ENCODE measurements at regions of chr3 and their contacts with region 1.

Region 1: DNA sequence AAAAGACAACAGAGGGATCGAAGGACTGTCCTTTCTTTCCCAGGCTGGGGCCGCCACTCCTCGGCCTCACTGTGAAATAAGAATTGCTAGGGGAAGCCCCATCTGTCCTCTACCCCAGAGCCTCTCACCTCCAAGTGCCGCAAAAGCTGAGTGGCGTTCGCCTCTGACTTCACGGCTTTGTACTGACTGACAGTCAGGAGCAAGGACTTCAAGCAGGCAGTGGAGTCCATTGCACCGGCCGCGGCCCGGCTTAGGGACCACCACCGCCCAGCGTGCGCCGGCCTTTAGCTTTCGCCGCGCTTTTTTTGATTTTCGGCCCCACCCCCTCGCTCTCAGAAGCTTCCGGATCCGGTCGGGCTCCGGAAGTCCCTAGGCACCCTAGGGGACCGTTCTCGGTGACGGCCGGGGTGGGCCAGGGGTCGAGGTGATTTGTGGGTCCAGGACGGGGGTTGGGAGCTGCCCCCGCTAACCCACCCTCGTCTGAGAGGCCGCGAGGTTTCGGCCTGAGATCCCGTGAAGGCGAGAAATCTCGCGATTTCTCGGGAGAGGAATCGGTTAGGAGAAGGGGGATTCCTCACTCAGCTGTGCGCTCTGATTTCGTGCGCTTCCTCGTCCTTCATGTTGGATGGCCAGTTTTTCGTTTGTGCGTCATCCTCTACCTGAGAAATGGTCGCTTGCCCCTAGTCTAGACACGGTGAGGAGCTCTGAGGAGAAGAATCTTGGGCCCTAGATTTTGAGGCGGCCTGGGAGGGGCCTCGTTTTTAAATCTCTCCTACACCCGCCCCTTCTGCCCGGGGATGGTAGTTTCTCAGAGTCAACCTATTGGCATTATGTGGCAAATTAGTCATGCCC is at the starts of genes CIP2A and DZIP3:
- DNase-seq: peak; percentile 64 to 96 (median 76)
- ATAC-seq: peak; percentile 80
- H3K4me3 ChIP-seq: peak within 1 kb of the TSS; percentile 79
- H3K4me3 Mint-ChIP-seq: peak within 1 kb of the TSS; percentile 96
- H3K27ac ChIP-seq: peak within 1 kb of the TSS; percentile 89 to 96
- H3K27ac Mint-ChIP-seq: peak within 1 kb of the TSS; percentile 99
- H3K4me1 ChIP-seq: peaks cover 12% of the 10 kb centered on the region
- H3K4me1 Mint-ChIP-seq: peaks cover 40% of the 10 kb centered on the region
- H3K27me3 ChIP-seq: no peaks in the 10 kb centered on the region
- H3K27me3 Mint-ChIP-seq: no peaks in the 10 kb centered on the region
- CTCF ChIP-seq: no peak
- total RNA-seq, gene CIP2A: 2.7 to 3.9 TPM
- total RNA-seq, gene DZIP3: 12.2 to 14.5 TPM

Region 2: GRCh38 chr3:107522510-107523288 is 1066.7 kb before region 1 on chr3 and contains the start of gene BBX:
- CTCF ChIA-PET with region 1: no interaction called
- POLR2A ChIA-PET with region 1: interaction called, 3 read pairs
- intact Hi-C with region 1: loop called in 1 of 2 experiments (anchors 10 kb)
- DNase-seq: peak; percentile 85 to 97 (median 92)
- ATAC-seq: peak; percentile 89
- H3K4me3 ChIP-seq: peak within 1 kb of the TSS; percentile 67
- H3K4me3 Mint-ChIP-seq: peak within 1 kb of the TSS; percentile 99
- H3K27ac ChIP-seq: peak within 1 kb of the TSS; percentile 77 to 85
- H3K27ac Mint-ChIP-seq: peak within 1 kb of the TSS; percentile 95
- H3K4me1 ChIP-seq: peaks cover 19% of the 10 kb centered on the region
- H3K4me1 Mint-ChIP-seq: peaks cover 26% of the 10 kb centered on the region
- H3K27me3 ChIP-seq: no peaks in the 10 kb centered on the region
- H3K27me3 Mint-ChIP-seq: no peaks in the 10 kb centered on the region
- CTCF ChIP-seq: no peak
- total RNA-seq, gene BBX: 79.7 to 81.8 TPM

Region 3: GRCh38 chr3:108578064-108578463 is 11.3 kb before region 1 on chr3:
- CTCF ChIA-PET with region 1: no interaction called
- POLR2A ChIA-PET with region 1: interaction called, 14 read pairs
- intact Hi-C with region 1: no loop called
- DNase-seq: no peak
- ATAC-seq: no peak
- H3K4me3 ChIP-seq: no peak overlapping the region
- H3K4me3 Mint-ChIP-seq: no peak overlapping the region
- H3K27ac ChIP-seq: no peak overlapping the region
- H3K27ac Mint-ChIP-seq: no peak overlapping the region
- H3K4me1 ChIP-seq: no peaks in the 10 kb centered on the region
- H3K4me1 Mint-ChIP-seq: no peaks in the 10 kb centered on the region
- H3K27me3 ChIP-seq: no peaks in the 10 kb centered on the region
- H3K27me3 Mint-ChIP-seq: no peaks in the 10 kb centered on the region
- CTCF ChIP-seq: no peak

Region 4: DNA sequence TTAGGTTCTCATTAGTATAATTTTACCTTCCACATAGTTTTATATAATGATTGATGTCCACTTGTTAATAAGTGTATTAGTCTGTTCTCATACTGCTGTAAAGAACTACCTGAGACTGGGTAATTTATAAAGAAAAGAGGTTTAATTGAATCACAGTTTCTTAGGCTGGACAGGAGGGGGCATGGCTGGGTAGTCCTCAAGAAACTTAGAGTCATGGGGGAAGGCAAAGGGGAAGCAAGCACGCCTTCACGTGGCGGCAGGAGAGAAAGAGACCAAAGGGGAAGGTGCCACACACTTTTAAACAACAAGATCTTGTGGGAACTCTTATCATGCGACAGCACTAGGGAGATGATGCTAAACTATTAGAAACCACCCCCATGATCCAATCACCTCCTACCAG is 19.4 kb after region 1 on chr3:
- CTCF ChIA-PET with region 1: interaction called, 7 read pairs
- POLR2A ChIA-PET with region 1: interaction called, 250 read pairs
- intact Hi-C with region 1: loop called in 1 of 2 experiments (anchors 2 kb)
- DNase-seq: no peak
- ATAC-seq: no peak
- H3K4me3 ChIP-seq: no peak overlapping the region
- H3K4me3 Mint-ChIP-seq: no peak overlapping the region
- H3K27ac ChIP-seq: no peak overlapping the region
- H3K27ac Mint-ChIP-seq: no peak overlapping the region
- H3K4me1 ChIP-seq: peaks cover 11% of the 10 kb centered on the region
- H3K4me1 Mint-ChIP-seq: peaks cover 34% of the 10 kb centered on the region
- H3K27me3 ChIP-seq: no peaks in the 10 kb centered on the region
- H3K27me3 Mint-ChIP-seq: no peaks in the 10 kb centered on the region
- CTCF ChIP-seq: no peak

Region 5: GRCh38 chr3:108818404-108818803 is 229.0 kb after region 1 on chr3:
- CTCF ChIA-PET with region 1: interaction called, 4 read pairs
- POLR2A ChIA-PET with region 1: interaction called, 19 read pairs
- intact Hi-C with region 1: no loop called
- DNase-seq: peak; percentile 31 to 87 (median 54)
- ATAC-seq: peak; percentile 92
- H3K4me3 ChIP-seq: no peak overlapping the region
- H3K4me3 Mint-ChIP-seq: peak overlapping the region; percentile 8
- H3K27ac ChIP-seq: no peak overlapping the region
- H3K27ac Mint-ChIP-seq: peak overlapping the region; percentile 29
- H3K4me1 ChIP-seq: peaks cover 22% of the 10 kb centered on the region
- H3K4me1 Mint-ChIP-seq: peaks cover 26% of the 10 kb centered on the region
- H3K27me3 ChIP-seq: no peaks in the 10 kb centered on the region
- H3K27me3 Mint-ChIP-seq: no peaks in the 10 kb centered on the region
- CTCF ChIP-seq: peak; percentile 80

Region 6: DNA sequence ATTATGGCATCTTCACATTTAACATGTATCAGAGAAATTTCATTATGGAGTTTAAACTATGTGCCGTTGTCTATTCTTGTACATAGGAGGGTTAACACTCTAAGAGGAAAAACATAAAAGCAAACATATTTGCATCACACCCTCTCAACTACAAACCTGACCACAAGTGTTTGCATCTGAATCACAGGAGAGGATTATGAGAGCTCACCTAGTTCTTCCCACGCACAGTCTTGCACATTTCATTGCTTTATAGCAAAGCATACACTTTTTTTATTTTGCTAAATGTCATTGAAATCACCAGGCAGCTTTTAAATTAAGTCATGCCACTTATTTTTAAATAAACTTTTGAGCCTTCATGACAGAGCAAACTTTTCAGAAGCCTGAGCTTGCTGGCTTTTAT is 245.7 kb after region 1 on chr3:
- CTCF ChIA-PET with region 1: no interaction called
- POLR2A ChIA-PET with region 1: interaction called, 22 read pairs
- intact Hi-C with region 1: loop called in 1 of 2 experiments (anchors 5 kb)
- DNase-seq: peak in 5 of 14 experiments; percentile 46 to 84 (median 74)
- ATAC-seq: peak; percentile 90
- H3K4me3 ChIP-seq: peak overlapping the region; percentile 37
- H3K4me3 Mint-ChIP-seq: peak overlapping the region; percentile 83
- H3K27ac ChIP-seq: peak overlapping the region; percentile 39 to 65
- H3K27ac Mint-ChIP-seq: peak overlapping the region; percentile 85
- H3K4me1 ChIP-seq: peaks cover 31% of the 10 kb centered on the region
- H3K4me1 Mint-ChIP-seq: peaks cover 93% of the 10 kb centered on the region
- H3K27me3 ChIP-seq: no peaks in the 10 kb centered on the region
- H3K27me3 Mint-ChIP-seq: no peaks in the 10 kb centered on the region
- CTCF ChIP-seq: no peak

Measured in CD4-positive, alpha-beta T cell (primary cell).